Psoas muscle (tissue), 8 donors: ENCODE measurements at regions of chr1 and their contacts with region 1.

Region 1: DNA sequence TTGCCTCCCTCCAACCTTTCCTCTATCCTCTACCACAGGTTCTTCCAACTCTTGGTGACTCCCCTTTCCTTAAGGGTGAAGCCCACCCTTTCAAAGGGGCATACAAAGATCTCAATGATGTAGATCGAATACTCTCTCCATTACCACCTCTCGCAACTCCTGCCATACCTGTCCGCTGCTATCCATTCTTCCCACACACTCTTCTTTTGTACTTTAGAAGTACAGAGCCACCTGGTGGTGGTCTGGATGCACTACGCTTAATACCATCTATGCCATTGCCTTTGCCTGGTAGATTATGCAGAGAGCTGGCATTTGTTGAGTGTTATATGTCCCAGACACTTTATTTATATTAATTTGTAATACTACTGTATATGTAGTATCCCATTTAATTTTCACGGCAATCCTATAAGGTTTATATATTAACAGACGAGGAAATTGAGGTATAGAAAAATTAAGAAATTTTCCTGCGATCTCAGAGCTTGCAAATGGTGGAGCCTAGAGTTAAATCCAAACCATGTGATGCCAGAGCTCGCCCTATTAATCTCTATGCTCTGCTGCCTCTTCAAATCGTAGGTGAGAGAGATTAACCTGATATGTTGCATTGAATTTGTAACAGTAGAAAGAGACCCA is 22.9 kb downstream of the TSHB start:
- DNase-seq: peak in 1 of 2 donors; percentile 25
- ATAC-seq: peak; percentile 67 to 84 (median 78)
- H3K4me3 ChIP-seq: no peak overlapping the region
- H3K27ac ChIP-seq: no peak overlapping the region
- H3K4me1 ChIP-seq: no peaks in the 10 kb centered on the region
- H3K27me3 ChIP-seq: peaks cover 0 to 6% (median 0%) of the 10 kb centered on the region in 3 donors
- CTCF ChIP-seq: peak; percentile 82

Region 2: DNA sequence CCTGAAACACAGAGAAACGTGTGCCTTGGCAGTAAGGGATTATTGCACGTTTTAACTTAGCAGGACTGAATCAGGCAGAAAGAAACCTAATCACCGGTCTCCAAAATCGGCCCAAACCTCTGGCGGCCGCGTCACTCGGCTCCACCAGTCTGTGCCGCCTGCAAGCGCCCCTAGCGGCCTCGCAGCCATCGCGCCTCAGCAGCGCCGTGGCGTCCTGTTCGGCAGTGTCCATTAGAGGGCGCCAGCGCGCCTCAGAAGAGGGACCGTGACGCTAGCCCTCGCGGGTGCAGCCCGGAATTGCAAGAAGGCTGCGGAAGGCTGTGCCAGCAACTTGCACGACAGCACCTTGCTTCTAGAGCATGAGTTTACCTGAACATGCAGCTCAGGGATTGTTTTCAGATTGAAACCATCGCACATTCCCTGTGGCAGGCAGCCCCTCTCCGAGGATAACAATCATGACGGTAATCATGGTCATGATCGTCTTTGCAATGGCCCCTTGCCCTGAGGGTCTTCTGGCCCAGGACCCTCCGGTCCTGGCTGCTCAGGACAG is 706.0 kb before region 1 on chr1:
- intact Hi-C with region 1: loop called in 1 of 2 experiments (anchors 2 kb)
- DNase-seq: peak; percentile 94 to 98
- ATAC-seq: peak; percentile 99 to 100 (median 100)
- H3K4me3 ChIP-seq: peak overlapping the region; percentile 71
- H3K27ac ChIP-seq: peak overlapping the region; percentile 54
- H3K4me1 ChIP-seq: peaks cover 9% of the 10 kb centered on the region
- H3K27me3 ChIP-seq: no peaks in the 10 kb centered on the region
- CTCF ChIP-seq: peak; percentile 100

Region 3: DNA sequence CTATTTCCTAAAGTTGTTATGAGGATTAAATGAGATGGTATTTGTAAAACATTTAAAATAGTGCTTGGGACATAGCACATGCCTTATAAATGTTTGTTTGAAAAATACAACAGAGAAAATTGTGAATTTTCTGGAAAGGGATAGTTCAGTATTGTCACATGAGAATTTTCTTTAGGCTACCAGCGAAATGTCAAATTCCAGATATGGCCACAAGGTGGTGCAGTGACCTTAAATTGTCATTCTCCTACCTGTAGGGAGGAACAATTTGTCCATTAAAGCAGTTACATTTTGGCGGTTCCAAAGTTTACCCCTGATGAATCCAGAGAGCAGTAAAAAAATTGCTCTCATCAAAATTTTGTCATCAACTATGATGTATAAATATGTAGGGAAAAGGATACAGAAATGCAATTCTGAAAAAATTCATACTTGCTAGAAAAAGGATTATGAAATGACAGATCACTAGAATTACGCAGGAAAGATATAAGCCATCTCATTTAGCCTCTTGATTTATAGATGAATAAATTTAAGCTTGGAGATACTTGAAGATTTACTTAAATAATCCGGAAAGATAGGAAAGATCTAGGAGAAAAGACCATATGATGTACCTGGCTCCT is 73.2 kb before region 1 on chr1:
- intact Hi-C with region 1: loop called in 1 of 2 experiments (anchors 2 kb)
- DNase-seq: peak in 1 of 2 donors; percentile 17
- ATAC-seq: peak in 1 of 4 donors; percentile 60
- H3K4me3 ChIP-seq: no peak overlapping the region
- H3K27ac ChIP-seq: no peak overlapping the region
- H3K4me1 ChIP-seq: no peaks in the 10 kb centered on the region
- H3K27me3 ChIP-seq: peaks cover 0 to 2% (median 0%) of the 10 kb centered on the region in 3 donors
- CTCF ChIP-seq: peak; percentile 89

Region 4: DNA sequence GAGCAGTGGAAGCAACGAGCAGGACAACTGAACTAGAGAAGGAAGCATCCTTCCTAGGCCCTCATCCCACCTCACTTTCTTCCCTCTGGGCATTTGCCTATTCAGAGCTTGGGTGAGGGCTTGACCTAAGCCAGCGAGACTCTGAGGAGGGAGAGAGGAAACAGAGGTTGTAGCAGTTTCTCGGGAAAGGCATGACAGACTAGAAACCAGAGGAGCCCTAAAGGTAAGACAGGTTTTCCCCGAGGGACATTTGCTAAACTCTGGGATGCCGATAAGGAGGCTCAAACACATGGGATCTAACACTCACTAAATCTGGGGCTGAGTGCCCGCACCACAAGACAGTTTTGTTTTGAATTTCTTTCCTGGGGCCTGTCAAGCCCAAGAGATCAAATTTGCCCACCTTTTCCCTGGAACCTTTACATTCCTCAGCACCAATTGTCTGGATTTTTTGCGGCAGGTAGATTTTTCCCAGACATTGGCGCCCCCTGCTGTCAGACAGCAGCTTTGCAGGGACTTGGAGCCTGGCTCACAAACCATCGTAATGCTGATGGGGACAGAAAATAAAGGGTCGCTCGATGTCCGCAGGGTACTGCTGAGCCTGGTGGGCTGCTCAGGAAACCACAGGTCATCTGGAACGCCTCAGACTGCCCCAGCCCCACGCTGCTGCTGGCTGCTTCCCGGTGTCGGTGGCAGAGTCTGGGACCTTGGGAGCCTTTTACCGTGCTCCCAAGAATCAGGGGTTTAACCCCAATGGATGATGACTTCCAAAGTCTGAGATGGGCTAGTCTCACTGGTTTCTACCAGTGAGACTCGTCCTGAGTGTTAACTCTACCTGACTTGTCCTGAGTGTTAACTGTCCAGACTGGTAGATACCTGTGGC is 60.2 kb after region 1 on chr1:
- intact Hi-C with region 1: loop called in 1 of 2 experiments (anchors 5 kb)
- DNase-seq: no peak
- ATAC-seq: peak in 2 of 4 donors; percentile 49 to 58
- H3K4me3 ChIP-seq: no peak overlapping the region
- H3K27ac ChIP-seq: no peak overlapping the region
- H3K4me1 ChIP-seq: no peaks in the 10 kb centered on the region
- H3K27me3 ChIP-seq: no peaks in the 10 kb centered on the region
- CTCF ChIP-seq: peak; percentile 93

Region 5: DNA sequence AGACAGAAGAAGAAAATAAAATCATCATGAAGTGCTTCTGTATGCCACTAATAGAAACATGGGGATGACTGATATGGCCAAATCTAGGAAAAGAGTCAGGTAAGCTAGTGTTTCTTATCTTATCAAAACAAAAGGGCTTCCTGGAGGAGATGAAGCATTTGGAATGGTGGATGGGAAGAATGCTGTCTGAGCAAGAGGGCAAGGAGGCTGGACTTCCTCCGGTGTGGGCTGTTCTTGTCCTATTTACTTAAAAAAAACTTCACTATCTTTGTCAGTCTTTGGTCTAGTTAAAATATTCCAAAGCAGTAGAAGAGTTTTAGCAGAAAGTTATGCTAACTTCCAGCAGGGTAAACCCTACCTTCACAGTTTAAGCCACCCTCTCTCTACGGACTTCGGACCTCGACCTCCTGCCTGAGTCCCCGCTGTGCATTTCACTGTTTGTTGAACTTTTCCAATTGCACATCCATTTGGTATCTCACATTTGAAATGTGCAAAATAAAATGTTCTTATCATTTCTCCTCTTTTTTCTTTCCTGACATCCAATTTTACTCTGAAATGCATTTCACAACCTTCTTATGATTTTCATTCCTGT is 101.5 kb after region 1 on chr1:
- intact Hi-C with region 1: no loop called
- DNase-seq: no peak
- ATAC-seq: no peak
- H3K4me3 ChIP-seq: no peak overlapping the region
- H3K27ac ChIP-seq: no peak overlapping the region
- H3K4me1 ChIP-seq: no peaks in the 10 kb centered on the region
- H3K27me3 ChIP-seq: no peaks in the 10 kb centered on the region
- CTCF ChIP-seq: no peak

Region 6: DNA sequence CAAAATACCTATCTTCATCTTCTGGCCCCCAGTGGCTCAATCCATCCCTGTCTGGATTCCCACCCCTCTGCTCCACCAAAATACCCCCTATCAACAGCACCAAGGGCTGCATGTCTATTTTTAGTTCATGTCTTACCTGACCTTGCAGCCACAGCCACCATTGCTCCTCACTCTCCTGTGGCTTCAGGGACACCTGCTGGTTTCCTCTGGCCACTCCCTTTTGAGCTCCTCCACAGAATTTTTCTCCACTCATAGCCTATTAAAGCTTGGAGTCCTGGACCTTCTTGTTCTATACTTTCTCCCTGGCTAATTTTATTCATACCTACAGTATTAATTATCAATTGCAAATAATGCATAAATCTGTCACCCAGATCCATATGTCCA is 410.8 kb after region 1 on chr1:
- intact Hi-C with region 1: loop called in 1 of 2 experiments (anchors 5 kb)
- DNase-seq: no peak
- ATAC-seq: peak in 3 of 4 donors; percentile 42 to 68 (median 64)
- H3K4me3 ChIP-seq: no peak overlapping the region
- H3K27ac ChIP-seq: no peak overlapping the region
- H3K4me1 ChIP-seq: no peaks in the 10 kb centered on the region
- H3K27me3 ChIP-seq: no peaks in the 10 kb centered on the region
- CTCF ChIP-seq: no peak